ENCODE measurements at regions of chr10 and their contacts with region 1.

Region 1: GRCh38 chr10:110547139-110547761 is 20.2 kb upstream of the SMC3 start:
- DNase-seq: peak in 4 of 5 donors; percentile 67 to 74 (median 70)
- H3K4me3 ChIP-seq: no peak overlapping the region
- H3K4me3 Mint-ChIP-seq: no peak overlapping the region
- H3K27ac ChIP-seq: no peak overlapping the region
- H3K27ac Mint-ChIP-seq: peak overlapping the region in 1 of 7 donors; percentile 59
- H3K4me1 ChIP-seq: peaks cover 8% of the 10 kb centered on the region
- H3K4me1 Mint-ChIP-seq: peaks cover 4 to 8% (median 5%) of the 10 kb centered on the region in 4 donors
- H3K27me3 ChIP-seq: peaks cover 3% of the 10 kb centered on the region
- H3K27me3 Mint-ChIP-seq: peaks cover 1 to 13% of the 10 kb centered on the region in 2 donors

Region 2: GRCh38 chr10:110311357-110311949 is 235.8 kb before region 1 on chr10:
- CTCF ChIA-PET with region 1: interaction called, 79 read pairs
- POLR2A ChIA-PET with region 1: interaction called, 16 read pairs
- intact Hi-C with region 1: loop called (anchors 1 kb)
- DNase-seq: peak; percentile 43 to 56 (median 48)
- H3K4me3 ChIP-seq: no peak overlapping the region
- H3K4me3 Mint-ChIP-seq: no peak overlapping the region
- H3K27ac ChIP-seq: no peak overlapping the region
- H3K27ac Mint-ChIP-seq: peak overlapping the region in 1 of 7 donors; percentile 9
- H3K4me1 ChIP-seq: peaks cover 1% of the 10 kb centered on the region
- H3K4me1 Mint-ChIP-seq: peaks cover 0 to 7% (median 0%) of the 10 kb centered on the region in 4 donors
- H3K27me3 ChIP-seq: no peaks in the 10 kb centered on the region
- H3K27me3 Mint-ChIP-seq: no peaks in the 10 kb centered on the region

Region 3: GRCh38 chr10:110414563-110415309 is 132.5 kb before region 1 on chr10:
- CTCF ChIA-PET with region 1: interaction called, 5 read pairs
- POLR2A ChIA-PET with region 1: no interaction called
- intact Hi-C with region 1: loop called (anchors 1 kb)
- DNase-seq: peak; percentile 88 to 99 (median 94)
- H3K4me3 ChIP-seq: peak overlapping the region in 1 of 2 donors; percentile 5
- H3K4me3 Mint-ChIP-seq: peak overlapping the region; percentile 22 to 71 (median 62)
- H3K27ac ChIP-seq: peak overlapping the region; percentile 62
- H3K27ac Mint-ChIP-seq: peak overlapping the region; percentile 89 to 98 (median 93)
- H3K4me1 ChIP-seq: peaks cover 43% of the 10 kb centered on the region
- H3K4me1 Mint-ChIP-seq: peaks cover 25 to 60% (median 33%) of the 10 kb centered on the region in 4 donors
- H3K27me3 ChIP-seq: no peaks in the 10 kb centered on the region
- H3K27me3 Mint-ChIP-seq: no peaks in the 10 kb centered on the region